ENCODE measurements at regions of chr19 and their contacts with region 1.

Region 1: DNA sequence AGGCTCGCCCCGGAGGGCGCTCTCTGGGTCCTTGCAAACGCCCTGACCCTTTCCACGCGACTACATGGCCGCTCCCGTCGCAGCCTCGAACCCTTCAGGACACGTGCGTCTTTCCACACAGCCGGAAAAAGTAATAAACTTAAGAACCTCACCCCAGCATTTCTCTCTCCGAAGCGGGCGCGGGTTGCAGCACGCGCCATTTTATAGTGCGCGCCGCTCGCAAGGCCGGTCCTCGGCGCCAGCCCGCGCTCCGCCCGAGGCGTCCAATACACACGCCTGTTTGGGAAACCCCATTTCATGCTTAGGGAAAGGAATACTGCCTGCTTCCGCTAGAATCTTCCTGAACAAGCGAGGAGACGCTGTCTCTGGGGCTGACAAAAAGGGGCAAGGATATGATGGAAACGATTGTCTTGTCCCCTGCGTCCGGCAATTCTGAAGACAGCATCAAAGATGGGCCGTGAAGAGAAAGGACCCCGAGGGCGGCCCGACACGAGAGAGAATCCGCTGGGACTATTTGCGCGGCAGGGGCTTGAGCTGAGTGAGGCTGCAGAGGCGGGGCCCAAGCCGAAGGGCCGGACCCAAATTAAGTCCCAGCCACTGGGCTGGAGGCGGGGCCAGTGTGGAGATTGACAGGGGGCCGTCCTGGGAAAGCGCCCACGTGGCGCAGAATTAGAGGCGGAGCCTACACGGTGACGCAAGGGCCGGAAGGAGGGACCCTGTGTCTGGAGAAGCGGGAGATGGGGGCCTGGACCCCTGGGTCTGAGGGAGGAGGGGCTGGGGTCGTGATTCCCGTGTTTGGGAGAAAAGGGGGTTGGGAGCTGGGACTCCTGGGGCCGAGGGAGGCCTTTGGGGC is 14.4 kb downstream of the ACP4 start:
- DNase-seq: peak; percentile 95 to 99
- H3K4me3 ChIP-seq: peak overlapping the region; percentile 92 to 93
- H3K27ac ChIP-seq: peak overlapping the region; percentile 97
- H3K4me1 ChIP-seq: peaks cover 0 to 13% of the 10 kb centered on the region in 2 donors
- H3K27me3 ChIP-seq: no peaks in the 10 kb centered on the region
- CTCF ChIP-seq: no peak

Region 2: GRCh38 chr19:50376166-50377050 is 428.2 kb before region 1 on chr19 and contains the start of gene NR1H2:
- intact Hi-C with region 1: loop called (anchors 2 kb)
- DNase-seq: peak; percentile 77 to 97
- H3K4me3 ChIP-seq: peak within 1 kb of the TSS; percentile 88 to 90
- H3K27ac ChIP-seq: peak within 1 kb of the TSS; percentile 99 to 100
- H3K4me1 ChIP-seq: peaks cover 0 to 6% of the 10 kb centered on the region in 2 donors
- H3K27me3 ChIP-seq: no peaks in the 10 kb centered on the region
- CTCF ChIP-seq: no peak
- total RNA-seq, gene NR1H2: 150 TPM

Region 3: DNA sequence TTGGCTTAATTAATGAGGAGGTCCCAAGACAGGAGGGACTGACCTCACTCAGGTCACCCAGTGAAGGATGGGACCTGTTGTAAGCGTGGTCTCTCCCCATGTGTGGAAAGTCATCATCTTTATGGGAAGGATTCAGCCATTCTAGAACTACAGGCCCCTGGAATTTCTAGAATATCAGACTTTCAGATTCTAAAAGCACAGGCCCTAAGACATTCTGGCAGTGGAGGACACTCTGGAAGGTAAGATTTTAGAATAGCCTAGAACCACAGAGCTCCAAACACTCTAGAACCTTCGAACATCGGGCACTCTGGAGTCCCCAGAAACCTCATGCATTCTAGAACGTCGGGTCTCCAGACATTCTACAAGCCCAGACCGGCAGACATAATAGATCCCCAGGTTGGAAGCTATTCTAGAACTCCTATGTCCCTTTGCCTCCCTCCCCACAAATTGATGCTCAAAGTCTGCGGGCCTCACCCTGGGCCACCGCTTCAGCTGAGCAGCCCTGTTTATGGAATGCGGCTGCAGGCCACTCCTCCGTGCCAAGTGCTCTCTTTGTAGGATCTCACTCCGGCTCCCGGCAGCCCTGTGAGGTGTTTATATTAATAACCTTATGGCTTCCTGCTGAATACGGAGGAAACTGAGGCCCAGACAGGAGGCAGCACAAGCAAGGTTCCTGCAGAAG is 30.6 kb after region 1 on chr19:
- intact Hi-C with region 1: no loop called
- DNase-seq: no peak
- H3K4me3 ChIP-seq: peak overlapping the region; percentile 57 to 64
- H3K27ac ChIP-seq: no peak overlapping the region
- H3K4me1 ChIP-seq: no peaks in the 10 kb centered on the region
- H3K27me3 ChIP-seq: no peaks in the 10 kb centered on the region
- CTCF ChIP-seq: no peak

Region 4: DNA sequence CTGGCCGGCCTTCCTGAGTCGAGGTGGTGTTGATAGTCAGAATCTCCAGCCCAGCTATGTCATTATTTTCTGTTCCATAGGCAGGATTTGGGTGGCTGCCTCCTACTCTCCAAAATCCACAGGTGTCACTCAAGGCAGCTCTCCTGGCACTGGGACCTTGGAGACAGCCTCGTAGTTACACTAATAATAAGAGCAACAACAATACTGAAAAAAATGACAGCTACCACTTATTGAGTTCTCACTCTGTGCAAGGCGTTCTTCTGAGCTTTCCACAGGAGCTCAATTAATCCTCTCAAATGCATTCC is 242.3 kb after region 1 on chr19:
- intact Hi-C with region 1: no loop called
- DNase-seq: no peak
- H3K4me3 ChIP-seq: no peak overlapping the region
- H3K27ac ChIP-seq: no peak overlapping the region
- H3K4me1 ChIP-seq: no peaks in the 10 kb centered on the region
- H3K27me3 ChIP-seq: no peaks in the 10 kb centered on the region
- CTCF ChIP-seq: no peak

Region 5: GRCh38 chr19:51593969-51594773 is 789.5 kb after region 1 on chr19:
- intact Hi-C with region 1: loop called (anchors 10 kb)
- DNase-seq: peak; percentile 91 to 99
- H3K4me3 ChIP-seq: peak overlapping the region; percentile 71 to 84
- H3K27ac ChIP-seq: peak overlapping the region in 1 of 2 donors; percentile 58
- H3K4me1 ChIP-seq: peaks cover 10 to 11% of the 10 kb centered on the region in 2 donors
- H3K27me3 ChIP-seq: no peaks in the 10 kb centered on the region
- CTCF ChIP-seq: no peak

Measured in ascending aorta (tissue), 2 donors.